Naive thymus-derived CD4-positive, alpha-beta T cell (primary cell): ENCODE measurements at regions of chr3 and their contacts with region 1.

Region 1: DNA sequence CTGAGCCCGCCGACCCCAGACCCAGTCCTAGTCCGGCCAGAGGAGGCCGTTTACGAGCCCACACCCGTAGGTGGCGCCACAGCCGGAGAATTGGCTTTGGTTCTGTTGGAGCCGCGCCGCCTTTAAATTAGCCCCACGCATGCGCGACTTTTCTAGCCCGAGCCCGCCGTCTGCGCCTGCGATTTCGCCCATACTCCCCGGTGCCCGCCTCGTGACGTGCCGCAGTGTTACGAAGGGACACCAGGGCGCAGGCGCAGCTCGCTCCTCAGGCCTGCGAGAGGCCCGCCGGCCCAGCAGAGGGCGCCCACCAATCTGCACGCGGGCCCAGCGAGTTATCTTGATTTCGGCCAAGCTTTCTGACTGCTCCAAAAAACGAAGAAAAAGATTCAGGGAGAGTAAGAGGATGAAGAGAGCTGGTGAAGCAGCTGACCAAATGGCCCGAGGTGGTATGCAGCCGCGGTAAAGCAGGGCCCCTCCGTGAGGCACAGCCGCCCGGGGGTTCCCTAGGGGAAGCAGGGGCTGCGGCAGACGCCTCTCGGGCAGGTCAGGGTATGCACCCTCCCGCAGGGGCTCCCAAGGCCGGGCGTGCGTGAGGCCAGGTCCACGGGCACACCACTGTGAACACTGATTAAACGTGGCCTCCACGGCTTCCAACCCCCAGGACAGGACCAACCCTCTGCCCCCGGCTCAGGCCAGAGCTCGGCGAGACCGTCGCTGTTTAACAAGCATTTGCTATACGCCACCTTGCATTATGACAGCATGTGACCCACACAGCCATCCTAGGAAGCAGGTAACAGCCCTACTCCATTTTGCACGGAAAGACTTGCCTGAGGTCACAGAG is 32.8 kb downstream of the RPN1 start:
- DNase-seq: peak; percentile 94 to 100 (median 99)
- ATAC-seq: peak; percentile 96
- H3K4me3 ChIP-seq: peak overlapping the region; percentile 99
- H3K4me3 Mint-ChIP-seq: peak overlapping the region; percentile 94 to 99 (median 97)
- H3K27ac ChIP-seq: peak overlapping the region; percentile 88
- H3K27ac Mint-ChIP-seq: peak overlapping the region; percentile 92 to 98 (median 97)
- H3K4me1 ChIP-seq: peaks cover 16 to 19% of the 10 kb centered on the region in 2 donors
- H3K4me1 Mint-ChIP-seq: peaks cover 10 to 36% (median 33%) of the 10 kb centered on the region in 7 donors
- H3K27me3 ChIP-seq: no peaks in the 10 kb centered on the region
- H3K27me3 Mint-ChIP-seq: no peaks in the 10 kb centered on the region

Region 2: DNA sequence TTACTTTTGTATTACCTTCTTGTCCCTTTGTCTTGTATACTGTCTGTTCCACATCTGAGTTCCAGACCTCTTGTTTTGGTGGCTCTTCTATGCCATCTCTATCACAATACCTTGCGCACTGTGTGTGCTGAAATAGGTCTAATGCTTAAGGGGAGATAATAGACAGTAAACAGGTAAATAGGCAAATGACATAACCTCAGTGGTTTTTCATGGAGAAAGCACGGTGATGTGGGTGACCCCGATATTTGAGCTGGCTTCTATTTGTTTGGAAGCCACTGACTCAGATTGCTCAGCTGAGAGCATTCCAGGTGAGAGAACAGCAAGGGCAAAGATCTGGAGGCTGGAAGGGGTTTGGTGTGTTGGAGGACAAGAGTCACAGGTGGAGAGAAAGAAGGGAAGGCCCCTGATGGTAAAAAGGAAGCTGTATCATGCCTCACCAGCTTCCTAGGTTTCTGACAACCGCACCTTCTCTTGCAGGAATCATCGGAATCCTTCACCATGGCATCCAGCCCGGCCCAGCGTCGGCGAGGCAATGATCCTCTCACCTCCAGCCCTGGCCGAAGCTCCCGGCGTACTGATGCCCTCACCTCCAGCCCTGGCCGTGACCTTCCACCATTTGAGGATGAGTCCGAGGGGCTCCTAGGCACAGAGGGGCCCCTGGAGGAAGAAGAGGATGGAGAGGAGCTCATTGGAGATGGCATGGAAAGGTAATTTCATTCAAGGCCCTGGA is 1018.8 kb before region 1 on chr3:
- CTCF ChIA-PET with region 1: no interaction called
- POLR2A ChIA-PET with region 1: no interaction called
- intact Hi-C with region 1: loop called in 1 of 2 experiments (anchors 1 kb)
- DNase-seq: no peak
- ATAC-seq: no peak
- H3K4me3 ChIP-seq: peak overlapping the region; percentile 75
- H3K4me3 Mint-ChIP-seq: peak overlapping the region; percentile 62 to 89 (median 82)
- H3K27ac ChIP-seq: peak overlapping the region; percentile 70
- H3K27ac Mint-ChIP-seq: peak overlapping the region; percentile 57 to 93 (median 86)
- H3K4me1 ChIP-seq: peaks cover 7% of the 10 kb centered on the region in 2 donors
- H3K4me1 Mint-ChIP-seq: peaks cover 13 to 57% (median 16%) of the 10 kb centered on the region in 7 donors
- H3K27me3 ChIP-seq: no peaks in the 10 kb centered on the region
- H3K27me3 Mint-ChIP-seq: no peaks in the 10 kb centered on the region

Region 3: GRCh38 chr3:128680602-128681368 is 63.0 kb after region 1 on chr3:
- CTCF ChIA-PET with region 1: interaction called, 6 read pairs
- POLR2A ChIA-PET with region 1: interaction called, 16 read pairs
- intact Hi-C with region 1: loop called (anchors 1 kb)
- DNase-seq: peak; percentile 94 to 98 (median 95)
- ATAC-seq: peak; percentile 95
- H3K4me3 ChIP-seq: peak overlapping the region; percentile 91
- H3K4me3 Mint-ChIP-seq: peak overlapping the region; percentile 84 to 98 (median 94)
- H3K27ac ChIP-seq: peak overlapping the region; percentile 92
- H3K27ac Mint-ChIP-seq: peak overlapping the region; percentile 95 to 100 (median 99)
- H3K4me1 ChIP-seq: peaks cover 11 to 14% of the 10 kb centered on the region in 2 donors
- H3K4me1 Mint-ChIP-seq: peaks cover 17 to 50% (median 38%) of the 10 kb centered on the region in 7 donors
- H3K27me3 ChIP-seq: no peaks in the 10 kb centered on the region
- H3K27me3 Mint-ChIP-seq: no peaks in the 10 kb centered on the region

Region 4: GRCh38 chr3:128804017-128804810 is 186.4 kb after region 1 on chr3:
- CTCF ChIA-PET with region 1: interaction called, 5 read pairs
- POLR2A ChIA-PET with region 1: interaction called, 4 read pairs
- intact Hi-C with region 1: loop called (anchors 1 to 2 kb)
- DNase-seq: peak in 8 of 9 donors; percentile 54 to 88 (median 84)
- ATAC-seq: peak; percentile 92
- H3K4me3 ChIP-seq: peak overlapping the region; percentile 49
- H3K4me3 Mint-ChIP-seq: peak overlapping the region; percentile 48 to 89 (median 80)
- H3K27ac ChIP-seq: peak overlapping the region; percentile 74
- H3K27ac Mint-ChIP-seq: peak overlapping the region; percentile 91 to 98 (median 96)
- H3K4me1 ChIP-seq: peaks cover 22 to 64% of the 10 kb centered on the region in 2 donors
- H3K4me1 Mint-ChIP-seq: peaks cover 59 to 91% (median 85%) of the 10 kb centered on the region in 7 donors
- H3K27me3 ChIP-seq: no peaks in the 10 kb centered on the region
- H3K27me3 Mint-ChIP-seq: no peaks in the 10 kb centered on the region

Region 5: GRCh38 chr3:128922804-128923459 is 305.2 kb after region 1 on chr3:
- CTCF ChIA-PET with region 1: interaction called, 3 read pairs
- POLR2A ChIA-PET with region 1: interaction called, 6 read pairs
- intact Hi-C with region 1: loop called (anchors 1 kb)
- DNase-seq: peak in 8 of 9 donors; percentile 60 to 73 (median 69)
- ATAC-seq: peak; percentile 73
- H3K4me3 ChIP-seq: peak overlapping the region; percentile 41
- H3K4me3 Mint-ChIP-seq: peak overlapping the region; percentile 75 to 87 (median 84)
- H3K27ac ChIP-seq: peak overlapping the region; percentile 63
- H3K27ac Mint-ChIP-seq: peak overlapping the region; percentile 75 to 96 (median 89)
- H3K4me1 ChIP-seq: peaks cover 13 to 23% of the 10 kb centered on the region in 2 donors
- H3K4me1 Mint-ChIP-seq: peaks cover 20 to 66% (median 52%) of the 10 kb centered on the region in 7 donors
- H3K27me3 ChIP-seq: no peaks in the 10 kb centered on the region
- H3K27me3 Mint-ChIP-seq: peaks cover 0 to 3% (median 0%) of the 10 kb centered on the region in 5 donors

Region 6: DNA sequence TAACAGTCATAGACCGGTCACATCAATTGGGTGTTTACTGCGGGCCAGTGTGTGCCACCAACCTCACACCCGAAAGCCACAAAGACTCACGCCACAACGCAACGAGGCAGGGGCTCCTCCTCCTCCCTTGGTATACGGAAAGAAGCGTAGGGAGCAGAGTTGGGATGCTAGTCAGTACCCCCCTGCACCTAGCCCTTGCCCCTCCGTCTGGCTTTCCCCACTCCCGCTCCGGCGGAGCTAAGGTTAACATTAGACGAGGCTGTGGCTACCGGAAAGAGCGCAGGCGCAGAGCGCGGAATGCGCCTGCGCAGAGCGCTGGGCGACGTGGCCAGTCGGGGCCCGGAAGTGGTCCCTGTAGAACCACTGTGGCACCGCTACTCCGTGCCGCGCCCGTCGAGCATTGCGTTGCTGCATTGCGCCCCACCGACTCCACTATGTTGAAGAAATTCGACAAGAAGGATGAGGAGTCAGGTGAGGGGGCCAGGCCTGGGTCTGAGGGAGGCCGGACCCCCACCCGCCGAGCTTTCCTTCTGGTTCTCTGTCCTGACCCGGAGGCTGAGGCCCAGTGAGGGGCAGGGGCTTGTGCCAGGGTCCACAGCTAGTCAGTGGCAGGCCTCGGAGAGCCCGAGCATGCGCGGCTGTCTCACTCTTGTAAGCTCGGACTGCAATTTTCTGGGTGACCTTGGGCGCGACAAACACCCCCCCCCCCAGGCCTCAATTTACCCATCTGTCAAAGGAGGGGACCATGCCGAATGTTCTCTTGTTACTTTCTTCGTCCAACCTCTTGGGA is 631.7 kb after region 1 on chr3 and contains the start of gene COPG1:
- CTCF ChIA-PET with region 1: no interaction called
- POLR2A ChIA-PET with region 1: no interaction called
- intact Hi-C with region 1: loop called (anchors 2 kb)
- DNase-seq: peak; percentile 78 to 93 (median 89)
- ATAC-seq: peak; percentile 91
- H3K4me3 ChIP-seq: peak within 1 kb of the TSS; percentile 73
- H3K4me3 Mint-ChIP-seq: peak within 1 kb of the TSS; percentile 89 to 99 (median 95)
- H3K27ac ChIP-seq: peak within 1 kb of the TSS; percentile 98
- H3K27ac Mint-ChIP-seq: peak within 1 kb of the TSS; percentile 91 to 99 (median 96)
- H3K4me1 ChIP-seq: peaks cover 21 to 22% of the 10 kb centered on the region in 2 donors
- H3K4me1 Mint-ChIP-seq: peaks cover 29 to 65% (median 53%) of the 10 kb centered on the region in 7 donors
- H3K27me3 ChIP-seq: no peaks in the 10 kb centered on the region
- H3K27me3 Mint-ChIP-seq: peaks cover 0 to 4% (median 0%) of the 10 kb centered on the region in 5 donors
- total RNA-seq, gene COPG1: 83.3 to 177 (median 103) TPM

Region 7: GRCh38 chr3:130111185-130111864 is 1493.5 kb after region 1 on chr3:
- CTCF ChIA-PET with region 1: no interaction called
- POLR2A ChIA-PET with region 1: no interaction called
- intact Hi-C with region 1: loop called in 1 of 2 experiments (anchors 5 kb)
- DNase-seq: peak; percentile 96 to 99 (median 98)
- ATAC-seq: peak; percentile 100
- H3K4me3 ChIP-seq: peak overlapping the region; percentile 58
- H3K4me3 Mint-ChIP-seq: peak overlapping the region; percentile 85 to 100 (median 98)
- H3K27ac ChIP-seq: peak overlapping the region; percentile 90
- H3K27ac Mint-ChIP-seq: peak overlapping the region; percentile 91 to 100 (median 100)
- H3K4me1 ChIP-seq: no peaks in the 10 kb centered on the region
- H3K4me1 Mint-ChIP-seq: peaks cover 11 to 22% (median 13%) of the 10 kb centered on the region in 7 donors
- H3K27me3 ChIP-seq: no peaks in the 10 kb centered on the region
- H3K27me3 Mint-ChIP-seq: peaks cover 0 to 14% (median 0%) of the 10 kb centered on the region in 5 donors